GM13977 (cell line): ENCODE measurements at regions of chr2 and their contacts with region 1.

Region 1: GRCh38 chr2:47842846-47843245 is 59.9 kb downstream of the MSH6 start:
- DNase-seq: no peak
- CTCF ChIP-seq: no peak

Region 2: GRCh38 chr2:47984041-47984440 is 141.2 kb after region 1 on chr2:
- in situ Hi-C with region 1: no loop called
- DNase-seq: no peak
- CTCF ChIP-seq: no peak

Region 3: GRCh38 chr2:48107326-48107925 is 264.6 kb after region 1 on chr2:
- in situ Hi-C with region 1: loop called (anchors 10 kb)
- DNase-seq: no peak
- CTCF ChIP-seq: no peak